Activated CD8-positive, alpha-beta T cell treated with anti-CD3 and anti-CD28 coated beads for 36 hours (primary cell): ENCODE measurements at regions of chr10 and their contacts with region 1.

Region 1: DNA sequence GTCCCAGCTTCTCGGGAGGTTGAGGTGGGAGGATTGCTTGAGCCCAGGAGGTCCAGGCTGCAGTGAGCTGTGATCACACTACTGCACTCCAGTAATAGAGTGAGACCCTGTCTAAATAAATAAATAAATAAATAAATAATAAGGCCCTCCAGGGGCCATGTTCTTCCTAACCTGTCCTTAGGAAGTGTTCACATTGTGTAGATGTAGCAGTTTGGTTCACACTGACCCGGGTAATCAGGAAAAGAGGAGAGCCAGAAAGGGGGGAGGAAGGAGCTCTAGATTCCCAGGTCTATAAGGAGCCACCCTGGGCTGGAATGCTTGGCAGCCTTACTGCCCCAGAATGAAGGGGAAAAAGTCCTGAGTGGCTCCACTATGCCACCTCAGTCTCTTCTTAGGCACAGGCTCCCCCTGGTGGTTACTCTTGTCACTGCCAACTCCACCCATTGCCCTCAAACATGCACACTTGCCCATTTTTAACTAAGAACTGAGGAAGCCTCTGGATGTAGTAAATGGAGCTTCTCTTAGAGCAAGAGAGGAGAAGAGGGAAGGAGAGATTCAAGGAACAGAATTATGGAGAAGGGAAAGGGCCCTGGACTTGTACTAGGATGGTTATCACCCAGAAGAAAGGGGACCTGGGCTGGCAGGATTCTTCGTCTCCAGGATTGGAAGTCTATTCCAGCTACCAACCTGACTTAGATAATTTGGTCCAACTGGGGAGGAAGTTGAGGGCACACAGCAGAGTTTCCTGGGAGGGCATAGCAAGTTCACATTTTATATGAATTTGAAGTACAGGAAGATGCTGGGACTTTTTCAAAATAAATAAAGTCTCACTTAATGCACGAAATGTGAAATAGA is 7.8 kb downstream of the HPS6 start:
- DNase-seq: peak; percentile 89
- ATAC-seq: peak; percentile 93
- H3K4me3 Mint-ChIP-seq: no peak overlapping the region
- H3K27ac Mint-ChIP-seq: no peak overlapping the region
- H3K4me1 Mint-ChIP-seq: peaks cover 2% of the 10 kb centered on the region
- H3K27me3 Mint-ChIP-seq: no peaks in the 10 kb centered on the region
- CTCF ChIP-seq: peak; percentile 93

Region 2: GRCh38 chr10:100730725-100731406 is 1342.0 kb before region 1 on chr10:
- CTCF ChIA-PET with region 1: no interaction called
- POLR2A ChIA-PET with region 1: no interaction called
- intact Hi-C with region 1: no loop called
- DNase-seq: peak; percentile 75
- ATAC-seq: peak; percentile 66
- H3K4me3 Mint-ChIP-seq: no peak overlapping the region
- H3K27ac Mint-ChIP-seq: no peak overlapping the region
- H3K4me1 Mint-ChIP-seq: peaks cover 34% of the 10 kb centered on the region
- H3K27me3 Mint-ChIP-seq: peaks cover 82% of the 10 kb centered on the region
- CTCF ChIP-seq: no peak

Region 3: DNA sequence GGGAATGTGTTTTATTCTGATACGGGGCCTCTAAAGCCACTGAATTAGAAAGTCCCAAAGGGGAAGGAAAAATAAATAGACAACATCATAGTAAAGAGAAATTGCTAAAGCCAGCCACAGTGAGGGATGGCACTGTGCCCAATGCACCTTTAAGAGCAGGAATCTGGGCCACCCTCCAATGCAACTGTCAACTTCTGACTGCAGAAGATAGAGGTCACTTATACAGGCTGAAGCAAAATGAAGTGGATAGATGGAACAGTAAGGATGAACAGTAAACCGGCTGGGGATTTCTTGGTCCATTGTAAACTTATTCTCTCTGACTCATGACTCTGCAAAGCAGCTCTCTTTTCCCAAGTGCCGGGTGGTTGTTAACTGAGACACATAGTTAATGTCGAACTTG is 175.3 kb before region 1 on chr10:
- CTCF ChIA-PET with region 1: interaction called, 10 read pairs
- POLR2A ChIA-PET with region 1: no interaction called
- intact Hi-C with region 1: no loop called
- DNase-seq: no peak
- ATAC-seq: no peak
- H3K4me3 Mint-ChIP-seq: no peak overlapping the region
- H3K27ac Mint-ChIP-seq: no peak overlapping the region
- H3K4me1 Mint-ChIP-seq: peaks cover 15% of the 10 kb centered on the region
- H3K27me3 Mint-ChIP-seq: no peaks in the 10 kb centered on the region
- CTCF ChIP-seq: no peak

Region 4: DNA sequence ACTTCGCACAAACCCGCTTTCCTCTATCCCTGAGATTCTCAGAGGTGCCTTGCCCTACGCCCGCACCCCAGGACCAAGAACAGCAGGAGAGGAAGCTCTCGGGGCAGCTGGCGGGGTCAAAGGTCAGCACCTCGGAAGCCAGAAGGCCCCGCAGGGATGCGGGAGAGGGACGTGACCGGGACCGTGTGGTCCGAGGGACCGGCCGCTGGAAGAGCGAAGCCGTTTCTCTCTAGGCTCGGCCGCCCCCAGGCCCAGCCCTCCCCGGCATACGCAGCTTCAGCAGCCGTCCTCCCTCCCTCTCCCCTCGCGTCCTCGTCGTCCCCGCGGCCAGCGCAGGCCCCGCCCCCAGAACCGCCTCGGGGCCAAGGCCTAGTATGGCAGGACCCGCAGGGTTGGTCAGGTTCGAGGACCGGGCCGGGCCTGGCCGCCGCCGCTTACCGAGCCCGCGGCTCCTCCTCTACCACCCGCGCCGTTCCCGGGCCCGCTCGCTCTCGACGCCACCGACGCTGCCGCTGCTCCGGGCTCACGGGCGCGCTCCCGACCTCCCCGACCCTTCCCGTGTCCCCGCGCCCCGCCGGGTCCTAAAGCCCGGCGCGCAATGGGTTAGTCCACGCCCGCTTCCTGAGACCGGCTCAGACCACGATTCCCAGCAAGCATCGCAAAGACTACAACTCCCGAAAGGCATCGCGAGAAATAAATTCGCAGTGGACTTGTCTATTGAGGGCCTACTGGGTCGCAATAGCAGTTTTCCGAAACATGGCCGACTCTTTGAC is 17.1 kb before region 1 on chr10 and contains the start of gene ARMH3:
- CTCF ChIA-PET with region 1: interaction called, 29 read pairs
- POLR2A ChIA-PET with region 1: interaction called, 4 read pairs
- intact Hi-C with region 1: no loop called
- DNase-seq: peak; percentile 96
- ATAC-seq: peak; percentile 98
- H3K4me3 Mint-ChIP-seq: peak within 1 kb of the TSS; percentile 90
- H3K27ac Mint-ChIP-seq: peak within 1 kb of the TSS; percentile 94
- H3K4me1 Mint-ChIP-seq: peaks cover 32% of the 10 kb centered on the region
- H3K27me3 Mint-ChIP-seq: no peaks in the 10 kb centered on the region
- CTCF ChIP-seq: no peak
- total RNA-seq, gene ARMH3: 16.2 to 18.4 TPM

Region 5: DNA sequence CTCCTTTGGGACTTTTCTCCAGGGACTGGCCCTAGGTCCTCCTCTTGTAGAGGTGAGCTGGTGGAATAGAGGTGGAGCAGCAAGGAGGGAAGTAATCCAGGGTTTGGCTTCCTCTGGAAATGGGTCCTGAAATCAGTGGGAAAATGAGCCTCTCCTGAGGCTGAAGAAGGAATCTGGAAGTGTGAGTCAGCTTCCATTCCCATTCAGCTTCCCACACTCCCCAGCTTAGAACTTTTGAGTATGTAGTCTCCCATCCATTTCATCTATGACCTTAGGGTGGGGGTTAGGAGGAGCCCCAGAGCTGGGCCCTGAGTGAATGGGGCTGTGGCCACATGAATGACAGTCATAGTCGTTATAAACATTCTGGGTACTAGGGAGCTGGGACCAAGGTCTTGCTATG is 29.5 kb after region 1 on chr10:
- CTCF ChIA-PET with region 1: interaction called, 12 read pairs
- POLR2A ChIA-PET with region 1: interaction called, 3 read pairs
- intact Hi-C with region 1: no loop called
- DNase-seq: no peak
- ATAC-seq: no peak
- H3K4me3 Mint-ChIP-seq: no peak overlapping the region
- H3K27ac Mint-ChIP-seq: no peak overlapping the region
- H3K4me1 Mint-ChIP-seq: peaks cover 14% of the 10 kb centered on the region
- H3K27me3 Mint-ChIP-seq: no peaks in the 10 kb centered on the region
- CTCF ChIP-seq: no peak

Region 6: DNA sequence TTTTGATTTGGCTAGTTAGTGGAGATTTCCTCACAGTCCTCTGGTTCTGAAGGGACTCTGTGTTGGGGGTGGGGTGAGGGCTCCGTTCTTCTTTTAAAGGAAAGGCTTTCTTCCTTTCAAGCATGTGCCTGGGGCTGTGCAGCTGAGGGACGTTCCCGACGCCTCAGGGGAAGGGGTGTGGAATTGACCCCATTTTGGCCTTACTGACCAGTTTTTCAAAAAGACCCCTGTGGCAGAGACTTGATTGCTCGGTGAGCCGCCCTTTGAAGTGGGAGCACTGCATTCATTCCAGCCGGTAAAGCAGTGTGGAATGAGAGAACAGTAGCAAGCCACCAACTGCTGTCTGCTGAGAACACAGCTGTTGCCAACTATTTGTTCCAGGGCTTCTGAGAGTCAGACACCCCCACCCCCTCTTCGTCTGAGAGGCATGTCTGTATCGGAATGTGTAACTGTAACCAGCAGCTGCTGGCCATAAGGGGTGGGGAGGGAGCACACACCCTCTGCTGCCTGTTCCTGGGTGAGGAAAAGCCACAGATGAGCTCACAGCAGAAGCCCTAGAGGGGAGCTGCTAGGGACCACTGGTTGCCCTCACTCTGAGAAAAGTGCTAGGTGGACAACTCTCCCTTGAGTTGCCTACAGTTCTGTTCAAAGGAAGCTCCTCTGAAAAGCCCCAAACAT is 704.0 kb after region 1 on chr10:
- CTCF ChIA-PET with region 1: no interaction called
- POLR2A ChIA-PET with region 1: no interaction called
- intact Hi-C with region 1: no loop called
- DNase-seq: peak; percentile 53
- ATAC-seq: peak; percentile 59
- H3K4me3 Mint-ChIP-seq: peak overlapping the region; percentile 14
- H3K27ac Mint-ChIP-seq: no peak overlapping the region
- H3K4me1 Mint-ChIP-seq: peaks cover 65% of the 10 kb centered on the region
- H3K27me3 Mint-ChIP-seq: no peaks in the 10 kb centered on the region
- CTCF ChIP-seq: no peak